ENCODE measurements at regions of chr12 and their contacts with region 1.

Region 1: GRCh38 chr12:64759035-64759901 is at the start of gene GNS:
- DNase-seq: peak; percentile 94 to 98
- ATAC-seq: peak; percentile 82 to 96 (median 83)
- H3K4me3 ChIP-seq: peak within 1 kb of the TSS; percentile 91
- H3K4me3 Mint-ChIP-seq: peak within 1 kb of the TSS; percentile 97
- H3K27ac ChIP-seq: peak within 1 kb of the TSS; percentile 71
- H3K27ac Mint-ChIP-seq: peak within 1 kb of the TSS; percentile 79 to 95
- H3K4me1 ChIP-seq: peaks cover 26% of the 10 kb centered on the region
- H3K4me1 Mint-ChIP-seq: peaks cover 50 to 58% of the 10 kb centered on the region in 2 donors
- H3K27me3 ChIP-seq: no peaks in the 10 kb centered on the region
- H3K27me3 Mint-ChIP-seq: no peaks in the 10 kb centered on the region
- CTCF ChIP-seq: no peak
- total RNA-seq, gene GNS: 51.9 to 73.9 (median 59.7) TPM

Region 2: DNA sequence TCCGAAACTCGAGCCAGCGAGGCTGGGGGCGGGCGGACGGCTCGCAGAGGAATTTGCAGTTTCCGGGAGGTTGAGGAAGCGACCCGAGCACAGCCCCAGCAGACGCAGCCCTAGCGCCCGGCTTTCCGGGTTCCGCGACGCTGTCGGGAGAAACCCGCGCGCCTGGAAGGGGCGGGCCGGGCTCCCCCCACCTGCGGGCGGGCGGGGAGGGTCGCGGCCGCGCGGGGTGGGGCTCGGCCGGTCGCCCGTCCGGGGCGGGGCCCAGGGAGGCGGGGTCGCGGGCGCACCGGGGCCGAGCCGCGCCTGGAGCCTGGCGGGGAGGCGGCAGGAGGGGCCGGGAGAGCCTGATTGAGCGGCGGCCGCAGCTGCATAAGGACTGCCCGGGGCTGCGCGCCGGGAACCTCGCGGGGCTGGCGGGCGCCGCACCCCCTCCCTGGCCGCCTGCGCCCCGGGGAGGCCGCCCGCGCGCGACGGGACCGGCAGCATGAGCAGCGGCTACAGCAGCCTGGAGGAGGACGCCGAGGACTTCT is 149.1 kb before region 1 on chr12 and contains the start of gene RASSF3:
- intact Hi-C with region 1: no loop called
- DNase-seq: peak; percentile 57 to 89
- ATAC-seq: peak; percentile 32 to 64 (median 50)
- H3K4me3 ChIP-seq: peak within 1 kb of the TSS; percentile 78
- H3K4me3 Mint-ChIP-seq: peak within 1 kb of the TSS; percentile 98
- H3K27ac ChIP-seq: peak within 1 kb of the TSS; percentile 79
- H3K27ac Mint-ChIP-seq: peak within 1 kb of the TSS; percentile 90 to 97
- H3K4me1 ChIP-seq: peaks cover 28% of the 10 kb centered on the region
- H3K4me1 Mint-ChIP-seq: peaks cover 39 to 47% of the 10 kb centered on the region in 2 donors
- H3K27me3 ChIP-seq: no peaks in the 10 kb centered on the region
- H3K27me3 Mint-ChIP-seq: no peaks in the 10 kb centered on the region
- CTCF ChIP-seq: no peak
- total RNA-seq, gene RASSF3: 63.4 to 105 (median 80.5) TPM

Region 3: GRCh38 chr12:64669270-64669842 is 89.9 kb before region 1 on chr12:
- intact Hi-C with region 1: loop called (anchors 5 kb)
- DNase-seq: peak; percentile 59 to 90
- ATAC-seq: peak; percentile 81 to 95 (median 90)
- H3K4me3 ChIP-seq: peak overlapping the region; percentile 49
- H3K4me3 Mint-ChIP-seq: peak overlapping the region; percentile 82
- H3K27ac ChIP-seq: peak overlapping the region; percentile 97
- H3K27ac Mint-ChIP-seq: peak overlapping the region; percentile 91 to 93
- H3K4me1 ChIP-seq: peaks cover 85% of the 10 kb centered on the region
- H3K4me1 Mint-ChIP-seq: peaks cover 85 to 90% of the 10 kb centered on the region in 2 donors
- H3K27me3 ChIP-seq: no peaks in the 10 kb centered on the region
- H3K27me3 Mint-ChIP-seq: no peaks in the 10 kb centered on the region
- CTCF ChIP-seq: no peak

Region 4: GRCh38 chr12:65133876-65134275 is 374.6 kb after region 1 on chr12:
- intact Hi-C with region 1: no loop called
- DNase-seq: no peak
- ATAC-seq: no peak
- H3K4me3 ChIP-seq: no peak overlapping the region
- H3K4me3 Mint-ChIP-seq: no peak overlapping the region
- H3K27ac ChIP-seq: no peak overlapping the region
- H3K27ac Mint-ChIP-seq: no peak overlapping the region
- H3K4me1 ChIP-seq: no peaks in the 10 kb centered on the region
- H3K4me1 Mint-ChIP-seq: no peaks in the 10 kb centered on the region
- H3K27me3 ChIP-seq: peaks cover 15% of the 10 kb centered on the region
- H3K27me3 Mint-ChIP-seq: peaks cover 18 to 49% of the 10 kb centered on the region in 2 donors
- CTCF ChIP-seq: no peak